Gastrocnemius medialis (tissue), 4 donors: ENCODE measurements at regions of chr12 and their contacts with region 1.

Region 1: GRCh38 chr12:1795785-1796514 is 24.4 kb upstream of the LRTM2 start:
- DNase-seq: peak; percentile 79 to 89
- ATAC-seq: peak; percentile 79 to 82
- H3K4me3 ChIP-seq: peak overlapping the region; percentile 51 to 67 (median 59)
- H3K27ac ChIP-seq: peak overlapping the region; percentile 72 to 80 (median 74)
- H3K4me1 ChIP-seq: peaks cover 25 to 26% of the 10 kb centered on the region in 2 donors
- H3K27me3 ChIP-seq: no peaks in the 10 kb centered on the region
- CTCF ChIP-seq: peak; percentile 88 to 100 (median 99)
- POLR2A ChIP-seq: peak; percentile 36 to 56

Region 2: DNA sequence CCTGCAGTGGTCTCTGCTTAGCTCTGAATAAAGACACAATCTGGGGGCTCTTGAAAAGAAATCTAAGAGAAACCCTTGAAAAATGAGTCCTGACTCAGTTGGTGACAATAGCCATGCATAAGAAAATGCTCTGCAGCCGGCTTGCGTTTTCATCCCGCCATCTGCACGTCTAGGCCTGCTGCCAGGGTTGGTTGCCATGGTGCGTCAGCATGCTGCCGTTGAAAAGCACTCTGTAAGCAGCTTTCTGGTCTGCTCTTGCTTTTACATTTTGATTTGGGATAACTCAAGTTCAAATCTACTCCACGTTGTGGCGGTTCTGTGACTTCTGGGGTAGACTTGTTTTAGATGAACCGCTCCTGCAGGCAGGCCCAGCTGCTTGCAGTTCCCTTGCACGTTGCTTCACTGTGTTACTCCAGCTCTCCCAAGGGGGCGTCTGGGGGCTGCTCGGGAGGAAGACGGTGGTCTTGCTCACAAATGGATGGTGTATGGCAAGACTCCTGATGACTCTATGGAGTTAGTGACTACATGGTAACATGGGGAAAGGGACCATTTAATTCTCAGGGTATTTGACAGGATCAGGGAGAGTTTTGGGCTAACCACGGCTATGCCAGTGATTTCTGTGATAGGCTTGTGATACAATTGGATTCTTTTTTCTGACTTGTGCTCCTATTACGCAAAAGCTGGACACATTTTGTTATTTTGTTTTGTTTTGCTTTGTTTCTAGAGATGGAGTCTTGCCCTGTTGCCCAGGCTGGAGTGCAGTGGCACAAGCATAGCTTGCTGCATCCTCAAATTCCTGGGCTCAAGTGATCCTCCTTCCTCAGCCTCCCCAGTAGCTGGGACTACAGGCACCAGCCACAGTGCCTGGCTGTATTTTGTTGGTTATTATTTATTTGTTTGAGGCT is 151.2 kb before region 1 on chr12:
- in situ Hi-C with region 1: loop called in 1 of 4 experiments (anchors 5 kb)
- intact Hi-C with region 1: no loop called
- DNase-seq: peak; percentile 38 to 52
- ATAC-seq: peak in 1 of 2 donors; percentile 47
- H3K4me3 ChIP-seq: no peak overlapping the region
- H3K27ac ChIP-seq: no peak overlapping the region
- H3K4me1 ChIP-seq: peaks cover 3 to 7% of the 10 kb centered on the region in 2 donors
- H3K27me3 ChIP-seq: no peaks in the 10 kb centered on the region
- CTCF ChIP-seq: no peak
- POLR2A ChIP-seq: no peak

Region 3: GRCh38 chr12:1650260-1650977 is 145.5 kb before region 1 on chr12:
- in situ Hi-C with region 1: loop called in 2 of 4 experiments (anchors 5 kb)
- intact Hi-C with region 1: loop called (anchors 1 kb)
- DNase-seq: no peak
- ATAC-seq: no peak
- H3K4me3 ChIP-seq: no peak overlapping the region
- H3K27ac ChIP-seq: no peak overlapping the region
- H3K4me1 ChIP-seq: no peaks in the 10 kb centered on the region
- H3K27me3 ChIP-seq: no peaks in the 10 kb centered on the region
- CTCF ChIP-seq: no peak
- POLR2A ChIP-seq: no peak

Region 4: GRCh38 chr12:1690578-1691122 is 105.3 kb before region 1 on chr12 and contains the start of gene ADIPOR2:
- in situ Hi-C with region 1: no loop called
- intact Hi-C with region 1: loop called (anchors 2 kb)
- DNase-seq: peak; percentile 92 to 93
- ATAC-seq: peak; percentile 96 to 97
- H3K4me3 ChIP-seq: peak within 1 kb of the TSS; percentile 86 to 98 (median 94)
- H3K27ac ChIP-seq: peak within 1 kb of the TSS; percentile 96 to 97 (median 96)
- H3K4me1 ChIP-seq: peaks cover 27 to 33% of the 10 kb centered on the region in 2 donors
- H3K27me3 ChIP-seq: no peaks in the 10 kb centered on the region
- CTCF ChIP-seq: no peak
- POLR2A ChIP-seq: peak; percentile 78 to 88
- total RNA-seq, gene ADIPOR2: 18.9 to 47.4 (median 25.1) TPM

Region 5: DNA sequence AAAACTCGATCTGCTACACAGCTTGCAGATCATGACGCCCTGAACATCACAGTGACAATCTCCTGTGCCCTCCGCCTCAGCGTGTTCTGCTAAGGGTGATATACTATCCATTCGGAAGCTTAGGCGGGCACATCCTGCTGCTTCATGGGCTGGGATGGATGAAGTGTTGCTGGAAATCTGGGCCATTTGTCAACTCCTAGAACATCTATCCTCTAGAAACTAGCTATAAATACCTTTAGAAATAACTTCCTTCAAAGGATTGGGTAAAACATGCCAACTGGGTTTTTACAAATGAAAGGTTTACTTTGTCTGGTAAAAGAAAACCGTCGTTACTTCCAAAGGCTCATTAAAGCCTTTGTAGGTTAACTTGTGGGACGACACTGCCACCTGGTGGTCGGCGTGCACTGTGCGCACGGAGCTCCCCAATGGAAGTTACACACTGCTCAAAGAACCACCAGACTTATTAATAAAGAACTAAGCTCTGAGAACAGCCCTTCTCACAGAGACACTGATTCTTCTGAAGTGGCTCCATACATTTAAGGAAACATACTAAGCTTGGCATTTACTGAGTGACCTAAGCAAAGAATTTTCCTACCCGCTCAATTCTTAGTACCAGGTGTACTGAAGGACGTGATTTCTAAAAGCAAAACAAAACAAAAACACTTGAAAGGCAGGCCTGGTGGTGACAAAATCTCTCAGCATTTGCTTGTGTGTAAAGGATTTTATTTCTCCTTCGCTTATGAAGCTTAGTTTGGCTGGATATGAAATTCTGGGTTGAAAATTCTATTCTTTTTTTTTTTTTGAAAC is 144.1 kb after region 1 on chr12:
- in situ Hi-C with region 1: loop called (anchors 5 kb)
- intact Hi-C with region 1: loop called (anchors 1 kb)
- DNase-seq: peak; percentile 57 to 76
- ATAC-seq: peak; percentile 63 to 85
- H3K4me3 ChIP-seq: peak overlapping the region in 1 of 4 donors; percentile 4
- H3K27ac ChIP-seq: peak overlapping the region in 1 of 4 donors; percentile 24
- H3K4me1 ChIP-seq: peaks cover 20 to 25% of the 10 kb centered on the region in 2 donors
- H3K27me3 ChIP-seq: no peaks in the 10 kb centered on the region
- CTCF ChIP-seq: peak; percentile 95 to 98 (median 96)
- POLR2A ChIP-seq: no peak

Region 6: GRCh38 chr12:2034633-2035430 is 238.9 kb after region 1 on chr12:
- in situ Hi-C with region 1: no loop called
- intact Hi-C with region 1: loop called (anchors 2 kb)
- DNase-seq: peak; percentile 43 to 61
- ATAC-seq: peak; percentile 83 to 90
- H3K4me3 ChIP-seq: peak overlapping the region; percentile 32 to 56 (median 38)
- H3K27ac ChIP-seq: no peak overlapping the region
- H3K4me1 ChIP-seq: peaks cover 8 to 9% of the 10 kb centered on the region in 2 donors
- H3K27me3 ChIP-seq: peaks cover 6 to 16% (median 7%) of the 10 kb centered on the region in 3 donors
- CTCF ChIP-seq: peak; percentile 74 to 97 (median 85)
- POLR2A ChIP-seq: no peak